Activated CD4-positive, alpha-beta memory T cell treated with anti-CD3 and anti-CD28 coated beads for 36 hours (primary cell): ENCODE measurements at regions of chr4 and their contacts with region 1.

Region 1: DNA sequence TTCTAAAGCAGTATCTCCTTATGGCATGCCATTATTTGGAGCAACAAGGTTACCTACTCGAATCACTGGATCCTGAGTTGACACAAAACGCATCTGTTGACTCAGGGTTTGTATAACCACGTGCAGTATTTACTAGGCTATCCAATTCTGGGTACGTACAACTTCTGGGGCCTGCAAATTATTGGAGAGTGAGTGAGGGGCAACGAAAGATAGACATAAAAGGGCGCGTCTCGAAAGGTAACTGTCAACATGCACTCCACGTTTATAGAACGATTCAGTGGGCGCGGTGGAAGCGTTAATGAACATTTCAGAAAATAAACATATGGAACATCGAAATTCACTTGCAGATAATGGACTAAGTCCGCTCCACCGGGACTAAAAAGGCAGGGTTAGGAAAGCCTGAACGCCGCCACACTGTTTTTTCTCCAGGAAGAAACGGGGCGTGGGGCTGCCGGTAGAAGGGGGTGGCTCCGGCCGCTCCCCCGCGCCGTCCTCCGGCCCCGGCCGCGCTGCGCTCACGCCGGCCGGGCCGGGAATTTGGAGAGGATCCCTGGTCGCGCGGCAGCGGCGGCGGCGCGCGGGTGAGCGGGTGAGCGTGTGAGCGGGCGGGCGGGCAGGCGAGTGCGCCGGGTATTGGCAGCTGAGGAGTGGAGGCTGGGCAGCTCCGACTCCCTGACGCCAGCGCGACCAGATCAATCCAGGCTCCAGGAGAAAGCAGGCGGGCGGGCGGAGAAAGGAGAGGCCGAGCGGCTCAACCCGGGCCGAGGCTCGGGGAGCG is at the start of gene SMAD1:
- DNase-seq: peak; percentile 53
- H3K4me3 Mint-ChIP-seq: peak within 1 kb of the TSS; percentile 66
- H3K27ac Mint-ChIP-seq: no peak within 1 kb of the TSS
- H3K4me1 Mint-ChIP-seq: peaks cover 8% of the 10 kb centered on the region
- H3K27me3 Mint-ChIP-seq: peaks cover 38% of the 10 kb centered on the region
- total RNA-seq, gene SMAD1: 2.8 to 2.9 TPM

Region 2: DNA sequence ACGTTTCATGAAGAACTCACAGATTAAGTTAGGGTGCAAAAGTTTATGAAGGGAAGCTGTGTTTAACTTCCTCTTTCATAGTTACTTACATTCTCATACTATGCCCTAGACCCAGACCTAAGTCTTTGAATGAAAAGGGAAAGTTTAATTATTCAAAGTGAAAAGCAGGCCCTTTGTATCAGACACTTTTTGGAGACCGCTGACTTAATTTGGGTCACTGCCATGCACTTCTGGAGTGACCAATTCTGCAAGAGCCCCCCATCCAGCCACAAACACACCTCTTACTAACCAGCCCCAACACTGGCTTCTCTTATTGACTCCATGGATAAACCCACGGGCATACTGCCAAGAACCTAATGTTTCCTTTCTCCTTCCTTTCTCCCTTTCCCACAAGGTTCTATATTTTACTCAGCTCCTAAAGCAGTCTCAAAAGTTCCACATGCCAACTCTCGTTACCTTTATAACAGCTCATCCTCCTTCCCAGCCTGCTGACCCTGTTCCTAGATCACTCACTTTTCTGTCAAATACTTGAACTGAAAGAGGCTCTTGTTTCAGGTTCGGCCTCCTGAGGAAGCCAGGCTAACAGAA is 348.7 kb before region 1 on chr4:
- CTCF ChIA-PET with region 1: no interaction called
- POLR2A ChIA-PET with region 1: no interaction called
- intact Hi-C with region 1: loop called (anchors 10 kb)
- DNase-seq: peak; percentile 56
- H3K4me3 Mint-ChIP-seq: no peak overlapping the region
- H3K27ac Mint-ChIP-seq: peak overlapping the region; percentile 52
- H3K4me1 Mint-ChIP-seq: peaks cover 59% of the 10 kb centered on the region
- H3K27me3 Mint-ChIP-seq: no peaks in the 10 kb centered on the region

Region 3: DNA sequence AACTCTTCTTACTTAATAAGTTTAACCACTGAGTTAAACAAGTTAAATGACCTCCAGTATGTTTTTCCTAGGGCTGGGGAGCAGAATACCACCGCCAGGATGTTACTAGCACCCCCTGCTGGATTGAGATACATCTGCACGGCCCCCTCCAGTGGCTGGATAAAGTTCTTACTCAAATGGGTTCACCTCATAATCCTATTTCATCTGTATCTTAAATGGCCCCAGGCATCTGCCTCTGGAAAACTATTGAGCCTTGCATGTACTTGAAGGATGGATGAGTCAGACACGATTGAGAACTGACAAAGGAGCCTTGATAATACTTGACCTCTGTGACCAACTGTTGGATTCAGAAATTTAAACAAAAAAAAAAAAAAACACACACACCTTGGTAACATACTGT is 76.4 kb after region 1 on chr4:
- CTCF ChIA-PET with region 1: interaction called, 3 read pairs
- POLR2A ChIA-PET with region 1: no interaction called
- intact Hi-C with region 1: loop called (anchors 5 kb)
- DNase-seq: peak; percentile 70
- H3K4me3 Mint-ChIP-seq: no peak overlapping the region
- H3K27ac Mint-ChIP-seq: no peak overlapping the region
- H3K4me1 Mint-ChIP-seq: peaks cover under 1% of the 10 kb centered on the region
- H3K27me3 Mint-ChIP-seq: peaks cover 8% of the 10 kb centered on the region

Region 4: GRCh38 chr4:145732895-145733880 is 251.8 kb after region 1 on chr4:
- CTCF ChIA-PET with region 1: no interaction called
- POLR2A ChIA-PET with region 1: no interaction called
- intact Hi-C with region 1: loop called (anchors 10 kb)
- DNase-seq: peak; percentile 92
- H3K4me3 Mint-ChIP-seq: peak overlapping the region; percentile 69
- H3K27ac Mint-ChIP-seq: peak overlapping the region; percentile 62
- H3K4me1 Mint-ChIP-seq: peaks cover 29% of the 10 kb centered on the region
- H3K27me3 Mint-ChIP-seq: peaks cover 6% of the 10 kb centered on the region

Region 5: DNA sequence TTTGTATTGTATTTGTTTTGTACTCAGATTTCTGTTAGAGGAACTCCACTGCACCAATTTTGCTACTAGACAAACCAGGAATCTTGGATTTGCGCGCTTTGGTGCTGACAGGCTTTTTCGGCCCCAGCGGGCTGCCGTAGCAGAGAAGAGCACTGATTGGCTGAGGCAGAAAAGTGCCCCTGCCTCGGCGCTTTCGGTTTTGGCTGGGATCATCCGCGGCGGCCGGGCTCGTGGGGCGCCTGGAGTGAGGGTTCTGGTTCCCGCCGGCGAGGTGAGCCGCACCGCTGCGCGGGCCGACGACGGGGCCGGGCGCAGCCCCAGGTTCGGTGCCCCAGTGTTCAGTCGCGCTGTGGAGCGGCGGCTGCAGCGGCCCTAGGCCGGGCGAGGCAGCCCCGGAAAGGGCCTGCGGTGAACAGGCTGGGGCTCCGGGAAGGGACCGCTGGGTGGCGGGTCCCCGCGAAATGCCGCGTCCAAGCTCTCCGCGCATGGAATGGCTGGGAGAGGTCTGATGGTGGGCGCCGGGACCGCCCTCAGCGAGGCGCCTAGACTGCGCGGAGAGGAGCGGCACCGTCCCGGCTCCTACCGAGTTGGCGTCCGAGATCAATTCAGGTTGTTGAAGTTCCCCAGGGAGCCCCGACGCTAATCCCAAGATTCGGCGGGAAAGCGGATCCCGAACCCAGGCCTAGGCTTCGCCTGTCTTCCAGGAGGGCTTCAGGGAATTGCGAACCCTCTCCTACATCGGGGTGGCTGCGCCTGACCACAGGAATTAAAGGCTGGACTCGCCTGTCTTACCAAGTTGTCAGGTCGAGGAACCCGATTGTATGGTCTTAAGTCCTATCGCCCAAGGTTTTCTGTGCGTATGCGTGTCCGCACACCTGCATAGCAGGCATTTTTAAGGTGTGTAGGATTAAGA is 694.4 kb after region 1 on chr4 and contains the start of gene LSM6:
- CTCF ChIA-PET with region 1: no interaction called
- POLR2A ChIA-PET with region 1: no interaction called
- intact Hi-C with region 1: loop called (anchors 10 kb)
- DNase-seq: peak; percentile 89
- H3K4me3 Mint-ChIP-seq: peak within 1 kb of the TSS; percentile 83
- H3K27ac Mint-ChIP-seq: peak within 1 kb of the TSS; percentile 87
- H3K4me1 Mint-ChIP-seq: peaks cover 42% of the 10 kb centered on the region
- H3K27me3 Mint-ChIP-seq: no peaks in the 10 kb centered on the region
- total RNA-seq, gene LSM6: 64.2 to 65.5 TPM